ENCODE measurements at regions of chr1 and their contacts with region 1.

Region 1: DNA sequence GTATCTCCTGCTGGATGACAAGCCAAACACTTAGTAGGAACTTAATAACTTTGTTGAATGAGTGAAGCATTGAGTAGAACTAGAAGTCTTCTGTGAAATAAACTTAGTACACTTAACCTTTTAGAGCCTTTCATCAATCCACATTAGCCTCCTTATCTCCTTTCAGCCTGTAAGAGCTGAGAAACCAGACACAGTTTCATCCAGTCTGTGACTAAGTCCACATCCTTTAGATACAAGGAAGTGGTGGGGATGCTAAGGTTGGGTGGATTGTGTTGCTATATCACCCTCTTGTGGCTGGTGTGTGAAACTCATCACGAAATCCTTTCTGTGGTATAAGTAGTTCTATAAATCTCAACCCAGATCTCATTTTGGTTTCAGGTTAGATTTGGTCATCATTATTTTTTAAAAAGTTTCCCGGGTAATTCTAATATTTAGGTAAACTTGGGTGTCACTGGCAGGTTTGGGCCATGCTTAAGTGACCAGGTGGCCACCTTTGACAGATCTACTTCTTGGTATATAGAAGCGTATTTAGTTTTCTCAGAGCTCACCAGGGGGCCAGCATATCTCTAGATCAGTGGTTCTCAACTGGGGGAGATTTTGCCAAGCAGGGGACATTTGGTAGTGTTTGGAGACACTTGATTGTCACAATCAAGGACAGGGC is 27.8 kb upstream of the CD84 start:
- DNase-seq: peak; percentile 81
- H3K4me3 Mint-ChIP-seq: no peak overlapping the region
- H3K27ac Mint-ChIP-seq: peak overlapping the region; percentile 82
- H3K4me1 Mint-ChIP-seq: peaks cover 48% of the 10 kb centered on the region
- H3K27me3 Mint-ChIP-seq: no peaks in the 10 kb centered on the region

Region 2: GRCh38 chr1:160342953-160343869 is 263.9 kb before region 1 on chr1 and contains the starts of genes COPA and NCSTN:
- CTCF ChIA-PET with region 1: no interaction called
- intact Hi-C with region 1: loop called (anchors 1 kb)
- DNase-seq: peak; percentile 95
- H3K4me3 Mint-ChIP-seq: peak within 1 kb of the TSS; percentile 99
- H3K27ac Mint-ChIP-seq: peak within 1 kb of the TSS; percentile 98
- H3K4me1 Mint-ChIP-seq: peaks cover 43% of the 10 kb centered on the region
- H3K27me3 Mint-ChIP-seq: no peaks in the 10 kb centered on the region
- total RNA-seq, gene COPA: 97.8 to 101 TPM
- total RNA-seq, gene NCSTN: 27.4 to 29.4 TPM

Region 3: DNA sequence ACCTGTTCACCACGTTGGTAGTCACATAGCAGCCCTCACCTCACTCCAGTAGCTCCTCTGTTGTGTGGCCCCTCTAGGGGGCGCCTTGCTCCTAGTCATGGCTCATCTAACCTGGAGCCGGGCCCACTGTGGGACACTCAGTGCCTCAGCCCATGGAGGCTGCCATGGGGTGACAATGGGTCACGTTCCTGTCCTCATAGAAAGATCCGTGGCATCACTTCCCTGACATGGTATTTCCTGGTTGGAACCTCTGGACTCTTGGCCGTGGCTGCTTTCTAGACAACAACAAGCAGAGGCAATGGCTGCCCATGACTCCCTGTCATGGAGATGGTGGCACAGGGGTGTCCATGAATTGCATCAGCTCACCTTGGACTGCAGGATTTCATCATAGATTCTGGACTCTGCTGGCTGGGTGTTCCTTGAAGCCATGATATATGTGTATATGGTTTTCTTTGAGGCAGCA is 56.5 kb before region 1 on chr1:
- CTCF ChIA-PET with region 1: interaction called, 87 read pairs
- intact Hi-C with region 1: loop called (anchors 1 kb)
- DNase-seq: peak; percentile 75
- H3K4me3 Mint-ChIP-seq: no peak overlapping the region
- H3K27ac Mint-ChIP-seq: peak overlapping the region; percentile 15
- H3K4me1 Mint-ChIP-seq: no peaks in the 10 kb centered on the region
- H3K27me3 Mint-ChIP-seq: no peaks in the 10 kb centered on the region

Region 4: DNA sequence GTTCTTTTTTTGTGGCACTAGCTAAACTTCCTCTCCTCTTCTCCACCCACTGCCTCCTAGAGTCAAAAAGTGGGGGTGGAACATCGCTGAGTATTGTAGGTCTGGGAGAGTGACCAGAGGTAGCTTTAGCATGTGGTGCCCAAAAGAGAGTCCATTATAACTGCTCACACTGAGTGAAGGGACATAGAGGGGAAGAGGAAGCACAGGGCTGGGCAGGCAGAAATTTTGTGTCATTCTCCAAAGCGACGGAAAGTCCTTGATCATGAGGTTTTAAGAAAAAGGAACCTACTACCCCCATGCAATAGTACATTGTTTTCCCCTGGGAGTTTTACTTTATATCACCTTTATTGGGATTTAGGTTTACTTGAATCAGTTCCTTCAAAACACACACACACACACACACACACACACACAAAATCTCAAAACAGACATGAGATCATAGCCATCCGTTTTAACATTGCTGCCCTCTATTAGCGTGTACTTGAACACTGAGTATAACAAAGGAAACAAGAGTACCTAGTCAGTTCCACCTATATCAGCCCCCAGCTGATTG is 32.0 kb before region 1 on chr1:
- CTCF ChIA-PET with region 1: interaction called, 22 read pairs
- intact Hi-C with region 1: loop called (anchors 2 kb)
- DNase-seq: no peak
- H3K4me3 Mint-ChIP-seq: peak overlapping the region; percentile 46
- H3K27ac Mint-ChIP-seq: peak overlapping the region; percentile 94
- H3K4me1 Mint-ChIP-seq: peaks cover 86% of the 10 kb centered on the region
- H3K27me3 Mint-ChIP-seq: no peaks in the 10 kb centered on the region

Region 5: GRCh38 chr1:160618763-160619274 is 11.7 kb after region 1 on chr1:
- CTCF ChIA-PET with region 1: interaction called, 65 read pairs
- intact Hi-C with region 1: no loop called
- DNase-seq: peak; percentile 70
- H3K4me3 Mint-ChIP-seq: no peak overlapping the region
- H3K27ac Mint-ChIP-seq: peak overlapping the region; percentile 61
- H3K4me1 Mint-ChIP-seq: peaks cover 57% of the 10 kb centered on the region
- H3K27me3 Mint-ChIP-seq: no peaks in the 10 kb centered on the region

Region 6: GRCh38 chr1:160711602-160712311 is 104.6 kb after region 1 on chr1 and contains the start of gene CD48:
- CTCF ChIA-PET with region 1: no interaction called
- intact Hi-C with region 1: no loop called
- DNase-seq: peak; percentile 70
- H3K4me3 Mint-ChIP-seq: no peak within 1 kb of the TSS
- H3K27ac Mint-ChIP-seq: no peak within 1 kb of the TSS
- H3K4me1 Mint-ChIP-seq: peaks cover 28% of the 10 kb centered on the region
- H3K27me3 Mint-ChIP-seq: no peaks in the 10 kb centered on the region
- total RNA-seq, gene CD48: 338 to 340 TPM

Region 7: GRCh38 chr1:161227196-161227871 is 620.2 kb after region 1 on chr1:
- CTCF ChIA-PET with region 1: no interaction called
- intact Hi-C with region 1: no loop called
- DNase-seq: peak; percentile 96
- H3K4me3 Mint-ChIP-seq: peak overlapping the region; percentile 100
- H3K27ac Mint-ChIP-seq: peak overlapping the region; percentile 72
- H3K4me1 Mint-ChIP-seq: peaks cover 27% of the 10 kb centered on the region
- H3K27me3 Mint-ChIP-seq: no peaks in the 10 kb centered on the region

Measured in activated naive CD4-positive, alpha-beta T cell treated with anti-CD3 and anti-CD28 coated beads for 36 hours (primary cell).